Right lobe of liver (tissue), 6 donors: ENCODE measurements at regions of chr7 and their contacts with region 1.

Region 1: DNA sequence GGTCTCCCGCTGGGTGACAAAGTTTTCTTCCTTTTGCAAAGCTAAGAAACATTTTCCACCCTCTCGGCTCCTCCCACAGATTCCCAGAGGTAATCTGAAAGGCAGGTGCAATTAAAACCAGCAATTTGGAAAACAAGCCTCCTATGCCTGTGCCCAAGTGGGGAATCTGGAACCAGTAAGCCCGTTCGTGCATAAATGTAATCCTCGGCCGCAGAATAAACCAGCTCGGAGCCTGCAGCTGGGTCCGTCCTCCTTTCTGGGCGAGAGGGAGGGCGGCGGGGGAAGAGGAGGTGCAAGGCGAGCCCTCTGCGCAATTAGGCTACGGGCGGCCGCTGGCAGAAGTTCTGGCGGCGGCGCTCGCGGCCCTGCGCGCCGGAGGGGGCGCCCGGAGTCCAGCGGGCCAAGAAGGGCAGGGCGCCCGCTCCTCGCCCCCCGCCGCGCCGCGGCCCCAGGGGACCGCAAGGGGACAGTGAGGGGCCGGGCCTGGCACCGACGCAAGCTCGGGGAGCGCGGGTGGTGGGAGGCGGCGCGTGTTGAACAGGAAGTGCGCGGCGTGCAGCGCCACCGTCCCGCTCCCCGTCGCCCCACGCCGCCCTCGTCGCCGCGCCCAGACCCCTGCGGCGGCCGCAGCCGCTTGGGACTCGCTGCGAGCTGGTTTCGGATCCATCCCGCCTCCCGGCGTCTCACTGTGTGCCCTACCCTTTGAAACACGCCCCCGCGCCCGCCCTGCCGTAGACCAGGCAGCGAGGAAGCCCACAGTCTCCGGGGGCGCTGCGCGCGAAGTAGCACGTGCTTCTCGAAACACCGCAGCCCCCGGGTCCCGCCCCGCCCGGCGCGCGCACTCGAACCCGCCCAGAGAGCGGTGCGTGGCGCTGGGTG is at the start of gene PRKAG2:
- DNase-seq: peak; percentile 79 to 89 (median 84)
- ATAC-seq: peak; percentile 31 to 54 (median 47)
- H3K4me3 ChIP-seq: peak within 1 kb of the TSS; percentile 84 to 98 (median 84)
- H3K27ac ChIP-seq: peak within 1 kb of the TSS; percentile 90 to 99 (median 98)
- H3K4me1 ChIP-seq: peaks cover 0 to 24% (median 3%) of the 10 kb centered on the region in 4 donors
- H3K27me3 ChIP-seq: no peaks in the 10 kb centered on the region
- CTCF ChIP-seq: peak; percentile 6 to 28 (median 14)
- POLR2A ChIP-seq: peak; percentile 82
- total RNA-seq, gene PRKAG2: 20.6 to 63.6 (median 29.5) TPM

Region 2: GRCh38 chr7:151917791-151918509 is 40.8 kb after region 1 on chr7:
- intact Hi-C with region 1: loop called in 1 of 2 experiments (anchors 5 kb)
- DNase-seq: peak in 1 of 3 donors; percentile 57
- ATAC-seq: peak; percentile 87 to 93 (median 88)
- H3K4me3 ChIP-seq: peak overlapping the region in 1 of 3 donors; percentile 14
- H3K27ac ChIP-seq: peak overlapping the region; percentile 67 to 90 (median 81)
- H3K4me1 ChIP-seq: peaks cover 0 to 32% (median 12%) of the 10 kb centered on the region in 4 donors
- H3K27me3 ChIP-seq: no peaks in the 10 kb centered on the region
- CTCF ChIP-seq: no peak
- POLR2A ChIP-seq: peak; percentile 15